ENCODE measurements at regions of chr1 and their contacts with region 1.

Region 1: DNA sequence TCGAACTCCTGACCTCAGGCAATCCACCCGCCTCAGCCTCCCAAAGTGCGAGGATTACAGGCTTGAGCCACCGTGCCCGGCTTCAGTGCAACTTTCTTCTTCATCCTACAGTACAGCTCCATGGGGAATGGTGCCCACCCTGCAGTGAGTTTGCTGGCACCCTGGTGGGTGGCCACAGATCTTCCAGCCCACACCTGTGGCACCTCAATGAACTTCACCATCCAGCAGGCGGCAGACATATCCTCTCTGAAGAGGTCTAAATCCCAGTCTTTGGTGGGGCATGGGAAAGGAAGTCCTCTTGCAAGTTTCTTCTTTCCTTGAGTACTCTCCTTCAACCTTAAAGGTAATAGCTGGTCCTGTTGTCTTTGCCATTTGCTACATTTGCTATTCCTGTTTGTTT is 18.1 kb upstream of the ZBTB8A start:
- DNase-seq: peak; percentile 44
- H3K4me3 ChIP-seq: peak overlapping the region; percentile 60
- H3K27ac ChIP-seq: no peak overlapping the region
- H3K4me1 ChIP-seq: peaks cover 7% of the 10 kb centered on the region
- CTCF ChIP-seq: peak; percentile 57; the same call in 1 of the 2 replicates

Region 2: DNA sequence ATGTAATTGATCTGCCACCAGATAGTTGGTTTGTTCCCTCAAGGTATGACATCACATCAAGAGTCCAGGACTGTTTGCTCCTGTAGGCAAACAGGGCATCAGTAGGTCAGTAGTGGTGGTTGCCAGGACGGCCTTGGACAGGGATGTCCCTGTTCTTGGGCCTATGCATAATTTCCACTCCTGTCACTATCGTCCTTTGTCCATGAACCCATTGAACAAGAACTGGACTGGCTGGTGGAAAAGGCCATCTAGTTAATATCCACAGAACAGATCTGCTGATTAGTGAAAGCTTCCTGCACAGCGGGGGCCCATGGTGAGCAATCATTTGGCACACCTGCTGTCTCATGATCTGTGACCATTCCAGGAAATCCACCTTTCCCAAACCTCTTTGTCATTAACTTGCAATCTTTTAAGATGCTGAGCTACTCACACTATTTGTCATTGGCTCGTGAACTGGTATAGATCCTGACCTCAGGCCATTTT is 114.5 kb before region 1 on chr1:
- CTCF ChIA-PET with region 1: no interaction called
- POLR2A ChIA-PET with region 1: interaction called, 10 read pairs
- intact Hi-C with region 1: no loop called
- DNase-seq: no peak
- H3K4me3 ChIP-seq: no peak overlapping the region
- H3K27ac ChIP-seq: no peak overlapping the region
- H3K4me1 ChIP-seq: no peaks in the 10 kb centered on the region
- CTCF ChIP-seq: no peak

Region 3: DNA sequence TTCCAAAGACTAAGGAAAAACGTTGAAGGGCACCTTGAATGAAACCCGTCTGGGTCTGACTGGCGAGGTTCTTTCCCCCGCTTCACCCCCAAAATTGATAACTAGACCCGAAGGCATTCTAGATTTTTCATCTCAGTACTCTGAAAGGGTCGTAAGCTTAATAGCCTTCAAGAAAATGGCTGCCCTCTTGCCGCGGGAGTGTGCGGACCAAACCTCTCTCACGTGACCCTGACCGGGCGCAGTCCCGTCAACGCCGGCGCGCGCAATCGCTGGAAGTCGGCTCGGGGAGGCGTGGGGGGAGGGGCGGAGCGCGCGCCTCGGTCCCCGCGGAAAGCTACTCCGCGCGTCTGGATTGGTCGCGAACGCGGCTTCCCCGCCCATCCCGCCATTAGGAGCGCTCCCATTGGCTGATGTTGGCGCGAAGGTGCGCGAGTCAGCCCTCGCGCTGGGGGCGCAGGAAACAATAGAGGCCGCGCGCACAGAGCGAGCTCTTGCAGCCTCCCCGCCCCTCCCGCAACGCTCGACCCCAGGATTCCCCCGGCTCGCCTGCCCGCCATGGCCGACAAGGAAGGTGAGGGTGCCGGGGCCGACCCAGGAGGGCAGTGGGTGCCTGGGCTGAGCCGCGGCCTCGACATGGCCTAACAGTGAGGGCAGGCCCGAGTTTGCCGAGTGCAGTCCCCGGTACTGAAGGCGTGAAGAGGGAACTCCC is 129.7 kb after region 1 on chr1 and contains the start of gene RBBP4:
- CTCF ChIA-PET with region 1: no interaction called
- POLR2A ChIA-PET with region 1: interaction called, 8 read pairs
- intact Hi-C with region 1: loop called (anchors 1 kb)
- DNase-seq: peak; percentile 98
- H3K4me3 ChIP-seq: peak within 1 kb of the TSS; percentile 82
- H3K27ac ChIP-seq: peak within 1 kb of the TSS; percentile 96
- H3K4me1 ChIP-seq: peaks cover 61% of the 10 kb centered on the region
- CTCF ChIP-seq: no peak
- total RNA-seq, gene RBBP4: 353 and 393 TPM in 2 replicates

Region 4: DNA sequence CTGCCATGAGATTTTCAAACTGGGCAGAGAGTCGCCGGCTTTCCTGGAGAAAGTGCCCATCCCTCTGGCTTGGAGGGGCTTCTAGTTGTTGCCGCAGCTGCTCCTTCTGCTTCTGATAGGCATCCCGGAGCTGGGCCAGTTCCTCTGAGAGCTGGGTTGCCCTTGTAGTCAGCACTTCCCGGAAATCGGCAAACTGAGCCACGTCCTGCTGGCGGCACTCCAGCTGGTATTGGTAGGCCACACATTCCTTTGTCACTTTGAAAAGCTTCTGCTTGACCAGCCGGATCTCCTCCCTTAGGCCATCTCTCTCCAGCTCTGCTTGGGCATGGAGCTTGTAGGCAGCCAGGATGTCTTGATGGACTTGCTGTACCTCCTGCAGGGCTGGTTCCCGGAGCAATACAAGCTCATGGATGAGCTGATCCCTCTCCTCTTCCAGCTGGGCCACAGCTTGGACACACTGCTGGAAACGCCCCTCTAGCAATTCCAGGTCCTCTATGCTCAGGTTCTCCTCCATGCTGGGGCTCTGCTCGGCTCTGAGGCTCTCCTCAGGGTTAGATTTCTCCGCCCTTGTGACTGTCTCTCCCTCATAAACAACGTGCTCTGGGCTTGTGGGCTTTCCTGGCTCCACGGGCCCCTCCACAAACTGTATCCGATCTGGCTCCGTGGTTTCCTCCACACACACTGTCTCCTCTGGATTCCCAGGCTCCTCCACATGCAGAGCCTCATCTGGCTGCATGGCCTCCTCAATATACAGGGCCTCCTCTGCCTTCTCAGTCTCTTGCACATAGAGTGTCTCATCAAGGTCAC is 174.1 kb after region 1 on chr1:
- CTCF ChIA-PET with region 1: no interaction called
- POLR2A ChIA-PET with region 1: no interaction called
- intact Hi-C with region 1: loop called (anchors 5 kb)
- DNase-seq: no peak
- H3K4me3 ChIP-seq: no peak overlapping the region
- H3K27ac ChIP-seq: no peak overlapping the region
- H3K4me1 ChIP-seq: no peaks in the 10 kb centered on the region
- CTCF ChIP-seq: no peak

Region 5: DNA sequence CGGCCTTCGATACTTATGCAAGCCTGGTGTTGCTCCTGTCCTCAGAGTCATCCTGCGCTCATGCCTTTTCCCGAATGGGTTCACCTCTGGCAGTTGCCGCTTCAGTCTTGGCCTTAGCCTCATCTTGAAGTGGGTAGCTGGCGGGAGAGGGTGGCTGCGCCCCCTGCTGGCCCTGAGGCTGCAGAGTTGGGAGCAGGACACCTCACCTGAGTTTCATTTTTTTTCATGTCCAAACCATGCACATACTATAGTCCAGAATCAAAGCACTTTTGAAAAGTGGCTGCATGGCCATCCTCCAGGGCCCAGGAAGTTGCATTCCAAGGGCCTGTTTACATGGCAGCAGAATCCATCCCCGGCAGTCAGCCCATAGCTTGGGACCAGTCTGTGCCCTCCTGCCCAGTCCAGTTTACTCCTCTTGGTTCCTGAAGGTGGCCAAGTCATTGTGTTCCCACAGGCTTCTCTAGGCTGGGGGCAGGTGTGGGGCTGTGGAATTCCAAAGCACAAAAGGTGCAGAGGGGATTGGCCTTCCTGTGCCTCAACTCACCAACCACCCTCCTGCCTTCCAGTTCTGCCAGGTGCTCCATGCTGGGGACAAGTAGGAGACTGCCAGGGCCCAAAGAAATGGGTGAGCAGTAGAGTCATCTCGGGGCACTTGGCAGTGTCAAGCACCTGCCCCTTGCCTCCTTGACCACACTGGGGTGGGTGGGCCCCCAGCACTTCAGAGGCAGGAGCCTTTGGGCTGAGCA is 252.0 kb after region 1 on chr1:
- CTCF ChIA-PET with region 1: no interaction called
- POLR2A ChIA-PET with region 1: no interaction called
- intact Hi-C with region 1: loop called (anchors 1 kb)
- DNase-seq: peak; percentile 75
- H3K4me3 ChIP-seq: no peak overlapping the region
- H3K27ac ChIP-seq: peak overlapping the region; percentile 15
- H3K4me1 ChIP-seq: no peaks in the 10 kb centered on the region
- CTCF ChIP-seq: peak; percentile 99

Region 6: DNA sequence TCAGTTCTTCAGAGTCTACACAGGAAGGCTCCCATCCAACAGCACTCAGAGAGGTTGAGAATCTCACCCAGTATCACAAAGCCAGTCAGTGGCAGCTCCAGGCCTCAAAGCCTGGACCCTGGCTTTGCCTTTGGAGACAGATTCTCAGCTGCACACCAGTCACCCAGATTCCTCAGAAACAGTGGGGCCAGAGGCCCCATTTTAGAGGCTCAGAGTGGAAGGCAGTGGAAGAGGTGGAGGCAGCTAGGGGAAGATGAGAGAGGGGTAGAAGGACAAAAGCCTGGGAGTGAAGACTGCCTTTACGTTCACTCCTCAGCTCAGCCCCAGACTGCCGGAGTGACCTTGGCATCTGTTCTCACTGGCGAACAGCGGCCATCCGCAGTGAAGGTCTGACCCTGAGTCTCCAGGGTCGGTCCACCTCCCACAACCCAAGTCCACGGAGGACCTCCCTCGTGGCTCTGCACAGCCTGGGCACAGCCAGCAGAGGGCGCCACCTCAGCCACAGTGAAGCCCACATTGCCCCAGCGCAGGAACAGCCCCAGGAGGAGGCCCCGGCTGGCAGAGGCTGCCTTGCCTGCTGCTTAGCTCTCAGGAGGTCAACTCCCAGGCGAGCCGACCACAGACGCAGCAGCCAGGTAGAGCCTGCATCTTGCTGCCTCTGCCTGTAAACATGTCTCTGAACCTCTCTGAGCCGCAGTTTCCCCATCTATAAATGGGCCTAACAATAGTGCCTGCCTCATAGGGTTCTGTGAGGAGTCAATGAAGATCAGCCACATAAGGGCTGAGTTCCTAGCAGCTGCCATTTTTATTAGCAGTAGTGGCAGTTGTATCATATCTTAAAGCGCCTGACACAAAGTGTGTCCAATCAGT is 355.4 kb after region 1 on chr1:
- CTCF ChIA-PET with region 1: no interaction called
- POLR2A ChIA-PET with region 1: no interaction called
- intact Hi-C with region 1: loop called (anchors 1 kb)
- DNase-seq: peak; percentile 73
- H3K4me3 ChIP-seq: no peak overlapping the region
- H3K27ac ChIP-seq: no peak overlapping the region
- H3K4me1 ChIP-seq: peaks cover 35% of the 10 kb centered on the region
- CTCF ChIP-seq: peak; percentile 97

Region 7: DNA sequence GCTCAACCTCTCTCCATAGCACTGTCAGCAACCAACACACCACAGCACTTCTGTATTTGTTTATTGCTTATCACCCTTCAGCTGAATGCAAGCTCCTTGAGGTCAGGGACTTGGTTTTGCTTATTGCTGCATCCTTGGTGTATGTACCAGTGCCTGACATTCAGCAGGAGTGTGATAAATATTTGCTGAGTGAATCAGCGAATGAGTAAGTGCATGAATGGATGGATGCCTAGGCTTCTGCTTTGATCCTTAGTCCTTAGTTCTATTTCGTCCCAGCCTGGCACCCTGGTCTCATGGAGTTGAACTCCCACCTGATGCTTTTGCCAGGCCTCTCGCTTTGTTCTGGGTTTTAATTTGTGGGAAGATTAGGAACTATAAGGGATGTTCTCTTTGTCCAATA is 1039.5 kb after region 1 on chr1:
- CTCF ChIA-PET with region 1: no interaction called
- POLR2A ChIA-PET with region 1: no interaction called
- intact Hi-C with region 1: no loop called
- DNase-seq: no peak
- H3K4me3 ChIP-seq: no peak overlapping the region
- H3K27ac ChIP-seq: no peak overlapping the region
- H3K4me1 ChIP-seq: no peaks in the 10 kb centered on the region
- CTCF ChIP-seq: no peak